GM10248 (cell line): ENCODE measurements at regions of chr3 and their contacts with region 1.

Region 1: GRCh38 chr3:185942907-185943759 is 5.3 kb upstream of the TRA2B start:
- DNase-seq: peak; percentile 84
- CTCF ChIP-seq: peak; percentile 99

Region 2: GRCh38 chr3:184965639-184966430 is 977.3 kb before region 1 on chr3:
- CTCF ChIA-PET with region 1: no interaction called
- POLR2A ChIA-PET with region 1: no interaction called
- DNase-seq: no peak
- CTCF ChIP-seq: no peak

Region 3: GRCh38 chr3:185737020-185737419 is 206.1 kb before region 1 on chr3:
- CTCF ChIA-PET with region 1: no interaction called
- POLR2A ChIA-PET with region 1: no interaction called
- DNase-seq: no peak
- CTCF ChIP-seq: no peak

Region 4: DNA sequence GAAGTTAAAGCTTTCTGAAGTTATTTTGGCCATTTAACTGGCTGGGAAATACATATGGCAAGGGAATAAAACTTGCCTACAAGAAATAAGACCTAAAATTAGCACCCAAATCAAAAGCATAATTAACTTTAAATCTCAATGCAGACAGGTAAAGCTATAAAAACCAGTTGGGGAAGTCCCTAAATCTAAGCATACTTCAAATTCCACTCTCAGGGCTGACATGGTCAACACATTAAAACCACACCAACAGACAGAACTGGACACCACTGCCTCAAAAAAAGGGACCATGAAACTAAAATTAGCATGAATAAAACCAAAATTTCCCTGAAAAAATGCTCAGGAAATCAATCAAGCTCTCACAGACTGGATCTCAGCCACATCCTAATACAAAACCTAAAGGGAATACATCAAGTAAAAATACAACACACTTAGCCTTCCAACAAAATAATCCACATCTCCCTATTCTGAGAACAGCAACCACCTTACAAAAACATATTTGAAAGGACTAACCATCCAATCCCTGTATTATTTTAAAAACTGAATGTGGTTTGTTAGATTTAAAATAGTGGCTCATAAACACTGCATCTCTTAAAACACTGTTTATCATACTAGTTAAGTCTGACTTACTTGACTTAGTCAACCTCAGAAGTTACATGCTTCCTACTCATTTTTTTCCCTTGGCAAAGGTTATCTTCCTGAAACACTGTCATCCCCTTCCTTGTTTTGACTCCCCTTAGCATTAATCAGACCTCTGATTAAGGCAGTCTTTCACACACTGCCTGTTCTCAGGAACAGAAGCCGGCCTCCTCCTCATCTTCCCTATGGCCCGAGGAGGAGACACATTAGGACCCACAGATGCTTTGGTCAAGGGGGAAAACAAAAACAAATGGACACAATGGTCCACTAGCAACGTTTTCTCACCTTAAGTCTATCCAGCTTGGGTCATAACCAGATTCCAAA is 13.7 kb before region 1 on chr3:
- CTCF ChIA-PET with region 1: interaction called, 21 read pairs
- POLR2A ChIA-PET with region 1: interaction called, 35 read pairs
- DNase-seq: no peak
- CTCF ChIP-seq: no peak

Region 5: GRCh38 chr3:185968168-185968567 is 25.0 kb after region 1 on chr3:
- CTCF ChIA-PET with region 1: interaction called, 148 read pairs
- POLR2A ChIA-PET with region 1: no interaction called
- DNase-seq: no peak
- CTCF ChIP-seq: no peak

Region 6: GRCh38 chr3:185983495-185984141 is 40.5 kb after region 1 on chr3:
- CTCF ChIA-PET with region 1: interaction called, 26 read pairs
- POLR2A ChIA-PET with region 1: no interaction called
- DNase-seq: peak; percentile 81
- CTCF ChIP-seq: peak; percentile 89

Region 7: DNA sequence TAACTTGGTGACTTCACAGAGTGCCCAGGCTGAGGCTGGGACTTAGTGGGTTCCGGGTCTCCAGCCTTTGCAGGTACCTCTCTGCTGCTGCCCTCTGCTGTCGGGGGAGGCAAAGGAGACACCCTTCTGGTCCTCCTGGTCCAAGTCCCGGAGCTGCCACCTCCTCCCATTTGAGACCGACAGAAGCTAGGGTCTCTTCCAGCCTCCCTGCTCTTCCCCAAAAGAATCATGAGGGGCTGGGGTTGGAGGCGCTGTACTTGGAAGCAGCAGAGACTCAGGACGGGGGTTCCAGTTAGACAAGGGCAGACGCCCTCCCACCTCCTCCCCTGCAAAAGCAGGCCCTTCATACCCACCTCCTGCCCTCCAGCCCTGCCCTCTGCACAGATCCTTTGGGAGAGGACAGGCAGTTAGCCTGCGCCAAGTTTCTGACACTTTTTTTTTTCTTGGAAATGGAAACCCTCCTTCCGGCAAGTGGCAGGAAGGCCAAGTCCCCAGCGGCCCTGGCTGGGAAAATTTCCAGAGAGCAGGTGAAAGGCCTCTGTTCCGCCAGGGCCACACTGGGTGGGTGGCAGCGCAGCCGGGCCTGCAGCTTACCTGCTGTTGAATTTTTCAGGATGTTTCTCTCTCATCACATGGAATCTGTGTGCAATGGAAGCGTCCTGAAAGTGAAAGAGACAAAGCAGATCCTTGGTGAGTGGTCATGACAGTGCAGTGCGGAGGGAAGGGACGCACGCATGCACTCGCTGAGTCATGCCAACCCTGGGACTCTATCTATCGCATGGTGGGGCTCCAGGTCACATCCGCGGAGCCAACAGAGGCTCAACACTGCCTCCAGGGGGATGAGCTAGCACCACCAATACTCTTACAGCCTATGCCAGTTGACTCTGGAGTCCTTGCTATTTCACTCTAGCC is 299.0 kb after region 1 on chr3:
- CTCF ChIA-PET with region 1: interaction called, 18 read pairs
- POLR2A ChIA-PET with region 1: no interaction called
- DNase-seq: peak; percentile 77
- CTCF ChIP-seq: peak; percentile 76

Region 8: GRCh38 chr3:186534113-186534669 is 591.1 kb after region 1 on chr3:
- CTCF ChIA-PET with region 1: interaction called, 53 read pairs
- POLR2A ChIA-PET with region 1: no interaction called
- DNase-seq: peak; percentile 64
- CTCF ChIP-seq: no peak

Region 9: DNA sequence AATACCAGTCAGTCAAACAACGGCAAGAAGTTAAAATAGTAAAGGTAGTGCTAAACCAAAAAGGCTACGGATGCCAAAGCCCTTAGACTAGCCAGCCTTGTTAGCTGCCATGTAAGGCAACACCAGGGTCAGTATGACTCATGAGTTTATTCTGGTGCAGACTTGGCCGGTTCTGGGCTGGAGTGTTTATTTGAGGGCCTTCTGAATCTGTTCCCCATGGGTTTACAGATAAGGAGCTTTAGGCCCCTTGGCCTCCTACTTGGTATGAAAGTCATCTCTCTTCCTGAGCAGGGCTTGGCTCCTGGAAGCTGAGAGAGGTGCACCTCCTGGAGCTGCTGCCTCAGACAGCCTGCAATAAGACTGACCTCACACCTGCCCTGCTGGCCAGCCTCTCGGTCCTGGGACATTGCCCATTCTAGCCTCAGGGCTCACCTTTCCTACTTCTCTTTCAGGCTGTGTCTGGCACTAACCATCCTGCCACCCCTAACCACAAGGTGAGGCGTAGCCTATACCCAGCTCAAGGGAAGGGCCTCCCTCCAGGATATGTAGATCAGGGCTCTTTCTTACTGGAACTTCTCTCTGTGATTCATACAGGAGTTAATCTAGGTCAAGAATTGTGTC is 1243.8 kb after region 1 on chr3:
- CTCF ChIA-PET with region 1: no interaction called
- POLR2A ChIA-PET with region 1: no interaction called
- DNase-seq: no peak
- CTCF ChIP-seq: no peak